Activated B cell treated with CpG ODN at 0.5 μM for 24 hours (primary cell): ENCODE measurements at regions of chr15 and their contacts with region 1.

Region 1: GRCh38 chr15:62068071-62068786 is 1.5 kb downstream of the C2CD4A start:
- DNase-seq: peak; percentile 51
- ATAC-seq: peak; percentile 38
- H3K4me3 Mint-ChIP-seq: peak overlapping the region; percentile 78
- H3K27ac Mint-ChIP-seq: peak overlapping the region; percentile 25
- H3K4me1 Mint-ChIP-seq: peaks cover 20% of the 10 kb centered on the region
- H3K27me3 Mint-ChIP-seq: peaks cover 18% of the 10 kb centered on the region
- CTCF ChIP-seq: no peak

Region 2: DNA sequence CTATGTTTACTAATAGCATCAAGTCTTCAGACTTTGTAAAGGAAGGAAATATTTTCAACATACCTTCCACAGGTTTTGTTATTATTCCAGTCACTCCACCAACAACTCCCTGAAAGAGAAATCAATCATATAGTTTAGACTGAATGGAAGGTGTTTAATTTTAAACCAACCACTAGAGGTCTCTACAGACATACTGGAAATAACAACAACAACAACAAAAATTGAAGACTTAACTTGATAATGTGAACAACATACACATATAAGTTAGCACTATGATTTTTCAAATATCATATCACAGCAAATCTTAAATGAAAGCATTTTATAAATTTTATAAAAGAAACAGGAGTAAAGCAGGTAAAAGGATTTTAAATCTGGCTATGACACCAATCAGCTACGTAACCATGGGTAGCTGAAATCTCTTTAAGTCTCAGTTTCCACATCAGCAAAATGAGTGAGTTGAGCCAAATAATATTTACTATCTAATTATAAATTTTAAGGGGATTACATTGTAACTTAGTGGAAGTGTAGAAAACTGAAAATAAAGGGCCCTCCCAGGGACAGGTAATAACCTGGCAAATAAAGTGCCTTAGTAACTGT is 196.2 kb before region 1 on chr15:
- CTCF ChIA-PET with region 1: interaction called, 5 read pairs
- POLR2A ChIA-PET with region 1: no interaction called
- intact Hi-C with region 1: loop called (anchors 1 kb)
- DNase-seq: no peak
- ATAC-seq: no peak
- H3K4me3 Mint-ChIP-seq: no peak overlapping the region
- H3K27ac Mint-ChIP-seq: no peak overlapping the region
- H3K4me1 Mint-ChIP-seq: no peaks in the 10 kb centered on the region
- H3K27me3 Mint-ChIP-seq: no peaks in the 10 kb centered on the region
- CTCF ChIP-seq: peak; percentile 72

Region 3: DNA sequence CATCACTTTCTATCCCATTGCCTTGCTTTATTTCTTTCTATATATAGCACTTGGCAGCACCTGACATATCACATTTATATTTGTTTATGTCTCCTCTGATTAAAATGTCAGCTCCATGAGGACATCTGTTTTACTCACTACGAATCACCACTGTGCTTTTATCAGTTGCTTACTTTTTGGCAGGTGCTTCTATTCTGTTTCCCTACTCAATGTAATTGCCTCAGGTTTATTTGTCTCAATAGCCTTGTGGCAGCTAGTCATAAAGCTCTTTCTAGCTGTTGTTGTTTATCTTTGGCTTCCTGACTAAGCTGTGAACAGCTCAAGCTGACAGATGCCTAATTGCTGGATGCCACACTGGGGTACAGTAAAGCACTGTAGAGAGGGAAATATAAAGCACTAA is 93.5 kb before region 1 on chr15:
- CTCF ChIA-PET with region 1: no interaction called
- POLR2A ChIA-PET with region 1: interaction called, 4 read pairs
- intact Hi-C with region 1: loop called (anchors 5 kb)
- DNase-seq: no peak
- ATAC-seq: no peak
- H3K4me3 Mint-ChIP-seq: no peak overlapping the region
- H3K27ac Mint-ChIP-seq: no peak overlapping the region
- H3K4me1 Mint-ChIP-seq: no peaks in the 10 kb centered on the region
- H3K27me3 Mint-ChIP-seq: no peaks in the 10 kb centered on the region
- CTCF ChIP-seq: no peak

Region 4: GRCh38 chr15:61994216-61994615 is 74.0 kb before region 1 on chr15:
- CTCF ChIA-PET with region 1: interaction called, 4 read pairs
- POLR2A ChIA-PET with region 1: no interaction called
- intact Hi-C with region 1: loop called (anchors 5 kb)
- DNase-seq: no peak
- ATAC-seq: no peak
- H3K4me3 Mint-ChIP-seq: no peak overlapping the region
- H3K27ac Mint-ChIP-seq: no peak overlapping the region
- H3K4me1 Mint-ChIP-seq: no peaks in the 10 kb centered on the region
- H3K27me3 Mint-ChIP-seq: no peaks in the 10 kb centered on the region
- CTCF ChIP-seq: no peak

Region 5: GRCh38 chr15:62026487-62027262 is 41.6 kb before region 1 on chr15:
- CTCF ChIA-PET with region 1: interaction called, 3 read pairs
- POLR2A ChIA-PET with region 1: interaction called, 4 read pairs
- intact Hi-C with region 1: loop called (anchors 1 kb)
- DNase-seq: no peak
- ATAC-seq: peak; percentile 76
- H3K4me3 Mint-ChIP-seq: peak overlapping the region; percentile 48
- H3K27ac Mint-ChIP-seq: peak overlapping the region; percentile 74
- H3K4me1 Mint-ChIP-seq: peaks cover 40% of the 10 kb centered on the region
- H3K27me3 Mint-ChIP-seq: no peaks in the 10 kb centered on the region
- CTCF ChIP-seq: no peak